GM10248 (cell line): ENCODE measurements at regions of chr14 and their contacts with region 1.

Region 1: DNA sequence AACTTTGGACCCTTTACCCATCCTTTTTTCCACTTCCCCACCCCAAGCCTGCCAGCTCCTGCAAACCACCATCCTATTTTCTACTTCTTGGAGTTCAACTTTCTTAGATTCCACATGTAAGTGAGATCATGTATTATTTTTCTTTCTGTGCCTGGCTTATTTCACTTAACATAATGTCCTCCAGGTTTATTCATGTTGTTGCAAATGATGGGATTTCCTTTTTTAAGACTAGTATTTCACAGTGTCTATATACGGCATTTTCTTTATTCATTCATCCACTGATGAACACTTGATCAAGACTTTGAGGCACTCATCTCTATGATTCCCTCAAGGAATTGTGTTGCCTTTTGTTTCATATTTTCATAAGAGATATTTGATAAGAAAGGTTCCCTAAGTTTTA is 5.6 kb upstream of the PRPF39 start:
- DNase-seq: no peak
- CTCF ChIP-seq: no peak

Region 2: DNA sequence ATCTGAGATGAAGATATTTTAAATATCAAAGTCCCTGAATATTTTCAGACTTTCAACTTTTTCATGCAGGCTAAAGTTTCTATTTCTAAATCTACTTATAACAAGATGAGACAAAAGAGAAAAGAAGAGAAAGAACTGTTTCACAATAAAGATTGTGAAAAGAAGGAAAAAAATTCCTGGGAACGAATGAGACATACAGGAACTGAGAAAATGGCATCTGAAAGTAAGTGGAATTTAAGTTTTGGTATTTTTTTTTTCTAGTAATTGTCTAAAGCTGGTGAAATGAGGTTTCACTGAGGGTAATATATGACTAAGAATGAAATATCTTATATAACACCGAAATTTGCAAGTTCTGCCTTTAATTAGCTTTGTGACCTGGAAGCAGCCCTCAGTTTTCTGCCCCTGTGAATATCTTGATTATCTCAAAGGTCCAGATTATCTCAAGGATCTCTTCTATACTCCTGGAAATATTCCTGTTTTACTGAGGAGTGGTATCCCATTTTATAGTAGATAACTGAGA is 50.2 kb before region 1 on chr14:
- CTCF ChIA-PET with region 1: no interaction called
- POLR2A ChIA-PET with region 1: no interaction called
- DNase-seq: peak; percentile 14
- CTCF ChIP-seq: no peak

Region 3: DNA sequence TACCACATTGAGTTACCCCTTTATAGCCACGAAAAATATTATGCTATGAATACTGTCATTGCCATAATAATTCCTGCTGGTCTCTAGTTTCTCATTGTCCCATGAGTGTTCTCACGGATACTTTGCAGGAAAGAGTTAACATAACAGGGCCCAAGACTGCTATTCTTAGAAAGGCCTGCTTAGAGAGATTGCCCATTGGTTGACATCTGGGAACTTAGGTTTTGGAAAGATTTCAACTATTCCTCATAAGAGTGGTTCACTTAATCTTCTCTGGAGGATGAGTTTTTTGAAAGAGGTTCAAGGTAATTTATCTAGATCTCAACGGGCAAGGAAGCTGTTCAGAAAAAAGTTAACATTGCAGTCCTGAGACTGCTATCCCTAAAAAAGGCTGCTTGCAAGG is 12.8 kb before region 1 on chr14:
- CTCF ChIA-PET with region 1: interaction called, 13 read pairs
- POLR2A ChIA-PET with region 1: no interaction called
- DNase-seq: no peak
- CTCF ChIP-seq: no peak